Right ventricle myocardium superior (tissue), 1 donor: ENCODE measurements at regions of chr5 and their contacts with region 1.

Region 1: DNA sequence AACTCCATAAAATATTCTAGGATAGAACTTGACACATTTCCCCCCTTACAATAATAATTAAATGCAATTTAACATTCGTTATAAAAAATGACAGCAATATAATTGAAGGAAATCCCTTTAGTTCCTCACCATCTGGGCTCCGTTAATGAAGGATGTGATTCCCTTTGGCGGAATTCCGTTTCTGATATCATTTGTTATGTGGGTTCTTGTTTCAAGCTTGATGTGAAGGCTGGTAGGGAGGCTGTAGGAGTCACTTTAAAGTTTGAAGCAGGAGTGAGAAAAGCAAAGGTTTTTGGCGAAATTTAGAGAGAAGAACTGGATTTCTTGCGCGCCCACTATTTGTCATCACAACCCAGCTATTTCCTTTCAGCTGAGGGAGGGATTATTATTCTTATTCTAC is 4.0 kb downstream of the RGS7BP start:
- DNase-seq: no peak
- ATAC-seq: no peak

Region 2: GRCh38 chr5:64331597-64332277 is 178.1 kb before region 1 on chr5:
- intact Hi-C with region 1: no loop called
- DNase-seq: peak; percentile 77
- ATAC-seq: peak; percentile 91

Region 3: DNA sequence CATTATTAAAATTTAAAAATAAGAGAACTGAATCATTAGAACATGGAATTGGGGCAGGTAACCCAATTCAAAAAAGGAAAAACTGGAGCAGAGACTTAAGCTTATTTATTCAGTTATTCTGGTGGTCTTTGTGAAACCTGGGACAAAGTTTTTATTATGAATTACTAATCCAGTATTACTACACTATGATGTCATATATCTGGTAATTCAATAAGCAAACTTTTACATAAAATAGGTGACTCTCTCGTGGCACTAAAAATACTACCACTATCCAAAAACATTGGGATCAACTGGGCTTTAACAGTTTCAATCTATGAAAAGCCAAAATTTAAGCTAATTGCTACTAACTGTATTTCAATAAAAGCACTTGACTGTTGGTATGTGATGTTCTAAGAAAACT is 139.1 kb before region 1 on chr5:
- intact Hi-C with region 1: no loop called
- DNase-seq: no peak
- ATAC-seq: no peak

Region 4: GRCh38 chr5:64576250-64576649 is 66.4 kb after region 1 on chr5:
- intact Hi-C with region 1: no loop called
- DNase-seq: no peak
- ATAC-seq: no peak

Region 5: GRCh38 chr5:64595031-64595855 is 85.4 kb after region 1 on chr5:
- intact Hi-C with region 1: loop called (anchors 5 kb)
- DNase-seq: no peak
- ATAC-seq: peak; percentile 81

Region 6: GRCh38 chr5:64634997-64635686 is 125.3 kb after region 1 on chr5:
- intact Hi-C with region 1: no loop called
- DNase-seq: no peak
- ATAC-seq: no peak